Activated CD8-positive, alpha-beta T cell treated with anti-CD3 and anti-CD28 coated beads for 36 hours (primary cell): ENCODE measurements at regions of chr3 and their contacts with region 1.

Region 1: GRCh38 chr3:123723522-123724168 is 138.8 kb upstream of the HACD2 start:
- DNase-seq: peak; percentile 59
- ATAC-seq: peak; percentile 89
- H3K4me3 Mint-ChIP-seq: no peak overlapping the region
- H3K27ac Mint-ChIP-seq: no peak overlapping the region
- H3K4me1 Mint-ChIP-seq: no peaks in the 10 kb centered on the region
- H3K27me3 Mint-ChIP-seq: peaks cover 8% of the 10 kb centered on the region
- CTCF ChIP-seq: peak; percentile 70

Region 2: DNA sequence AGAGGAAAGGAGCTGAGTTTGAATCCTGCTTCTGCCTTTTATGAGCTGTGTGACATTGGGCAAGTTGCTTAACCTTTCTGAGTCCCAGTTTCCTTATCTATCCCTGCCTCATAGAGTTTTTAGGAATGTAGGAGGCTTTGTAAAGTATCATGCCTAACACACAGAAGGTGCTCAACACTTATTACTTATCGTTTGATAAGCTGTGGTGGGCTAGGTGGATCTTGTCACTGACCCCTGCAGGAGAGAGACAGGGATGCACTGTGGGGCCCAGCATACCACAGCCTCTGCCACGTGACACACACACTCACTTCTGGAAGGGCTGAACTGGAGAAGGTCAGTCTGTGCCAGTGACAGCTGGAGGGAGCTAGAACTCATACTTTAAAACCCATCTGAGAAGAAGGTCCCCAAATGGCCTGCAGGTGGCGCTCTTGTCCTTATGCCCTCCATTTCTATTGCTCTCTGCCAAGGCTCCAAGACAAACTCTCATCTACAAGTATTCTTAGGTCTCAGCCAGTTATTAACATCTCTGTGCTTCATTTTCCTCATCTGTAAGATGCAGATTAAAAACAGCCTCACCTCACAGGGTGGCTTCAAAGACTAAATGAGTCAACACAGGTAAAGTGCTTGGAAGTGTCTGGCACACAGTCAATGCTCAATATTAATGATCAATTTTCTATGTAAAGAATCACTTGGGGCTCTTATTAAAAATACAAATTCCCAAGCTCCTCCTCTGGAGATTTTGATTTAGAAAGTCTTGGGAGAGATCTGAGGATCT is 81.3 kb before region 1 on chr3:
- CTCF ChIA-PET with region 1: interaction called, 33 read pairs
- POLR2A ChIA-PET with region 1: no interaction called
- intact Hi-C with region 1: loop called (anchors 5 kb)
- DNase-seq: peak; percentile 88
- ATAC-seq: peak; percentile 97
- H3K4me3 Mint-ChIP-seq: no peak overlapping the region
- H3K27ac Mint-ChIP-seq: no peak overlapping the region
- H3K4me1 Mint-ChIP-seq: no peaks in the 10 kb centered on the region
- H3K27me3 Mint-ChIP-seq: no peaks in the 10 kb centered on the region
- CTCF ChIP-seq: peak; percentile 79

Region 3: GRCh38 chr3:123652346-123652984 is 71.2 kb before region 1 on chr3:
- CTCF ChIA-PET with region 1: interaction called, 49 read pairs
- POLR2A ChIA-PET with region 1: no interaction called
- intact Hi-C with region 1: no loop called
- DNase-seq: peak; percentile 64
- ATAC-seq: peak; percentile 66
- H3K4me3 Mint-ChIP-seq: no peak overlapping the region
- H3K27ac Mint-ChIP-seq: no peak overlapping the region
- H3K4me1 Mint-ChIP-seq: no peaks in the 10 kb centered on the region
- H3K27me3 Mint-ChIP-seq: no peaks in the 10 kb centered on the region
- CTCF ChIP-seq: peak; percentile 69

Region 4: GRCh38 chr3:123660900-123661299 is 62.7 kb before region 1 on chr3:
- CTCF ChIA-PET with region 1: interaction called, 49 read pairs
- POLR2A ChIA-PET with region 1: no interaction called
- intact Hi-C with region 1: no loop called
- DNase-seq: no peak
- ATAC-seq: no peak
- H3K4me3 Mint-ChIP-seq: no peak overlapping the region
- H3K27ac Mint-ChIP-seq: no peak overlapping the region
- H3K4me1 Mint-ChIP-seq: no peaks in the 10 kb centered on the region
- H3K27me3 Mint-ChIP-seq: peaks cover 6% of the 10 kb centered on the region
- CTCF ChIP-seq: no peak

Region 5: GRCh38 chr3:123713211-123713610 is 10.4 kb before region 1 on chr3:
- CTCF ChIA-PET with region 1: interaction called, 11 read pairs
- POLR2A ChIA-PET with region 1: no interaction called
- intact Hi-C with region 1: no loop called
- DNase-seq: no peak
- ATAC-seq: no peak
- H3K4me3 Mint-ChIP-seq: no peak overlapping the region
- H3K27ac Mint-ChIP-seq: no peak overlapping the region
- H3K4me1 Mint-ChIP-seq: no peaks in the 10 kb centered on the region
- H3K27me3 Mint-ChIP-seq: no peaks in the 10 kb centered on the region
- CTCF ChIP-seq: no peak